WTC11 (cell line): ENCODE measurements at regions of chr6 and their contacts with region 1.

Region 1: DNA sequence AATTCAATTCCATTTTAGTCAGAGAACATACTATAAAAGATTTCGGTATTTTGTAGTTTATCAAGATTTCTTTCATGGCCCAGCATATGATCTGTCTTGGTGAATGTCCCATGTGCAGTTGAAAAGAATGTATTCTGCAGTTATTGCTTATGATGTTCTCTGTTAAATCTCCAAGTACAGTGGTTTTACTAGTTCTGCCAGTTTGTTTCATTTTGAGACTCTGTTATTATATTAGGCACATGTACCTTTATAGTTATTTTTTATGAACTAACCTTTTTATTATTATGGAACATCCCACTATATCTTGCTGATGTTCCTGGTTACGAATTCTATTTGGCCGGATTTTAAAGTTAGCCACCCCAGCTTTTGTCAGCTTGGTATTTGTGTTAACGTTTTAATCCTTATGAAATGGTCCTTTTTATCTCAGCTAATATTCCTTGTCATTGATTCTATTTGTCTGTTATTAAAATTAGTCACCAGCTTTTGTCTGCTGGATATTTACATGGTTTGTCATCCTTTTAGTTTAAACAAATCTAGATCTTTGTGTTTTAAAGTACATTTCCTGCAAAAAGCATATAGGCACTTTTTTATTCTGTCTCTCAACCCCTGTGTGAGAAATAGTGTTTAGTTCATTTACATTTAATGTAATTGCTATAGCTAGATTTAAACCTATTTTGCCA is 48.9 kb downstream of the VTA1 start:
- DNase-seq: no peak
- ATAC-seq: no peak
- H3K4me3 Mint-ChIP-seq: no peak overlapping the region
- H3K27ac Mint-ChIP-seq: no peak overlapping the region
- H3K4me1 Mint-ChIP-seq: no peaks in the 10 kb centered on the region
- H3K27me3 Mint-ChIP-seq: no peaks in the 10 kb centered on the region
- CTCF ChIP-seq: no peak

Region 2: GRCh38 chr6:142155895-142156757 is 39.9 kb before region 1 on chr6:
- CTCF ChIA-PET with region 1: interaction called, 11 read pairs
- POLR2A ChIA-PET with region 1: no interaction called
- DNase-seq: no peak
- ATAC-seq: peak; percentile 93
- H3K4me3 Mint-ChIP-seq: peak overlapping the region; percentile 52
- H3K27ac Mint-ChIP-seq: peak overlapping the region; percentile 97
- H3K4me1 Mint-ChIP-seq: peaks cover 44% of the 10 kb centered on the region
- H3K27me3 Mint-ChIP-seq: no peaks in the 10 kb centered on the region
- CTCF ChIP-seq: peak; percentile 41; the same call in 1 of the 2 replicates

Region 3: GRCh38 chr6:142207265-142207877 is 11.4 kb after region 1 on chr6:
- CTCF ChIA-PET with region 1: interaction called, 11 read pairs
- POLR2A ChIA-PET with region 1: no interaction called
- DNase-seq: peak; percentile 59
- ATAC-seq: peak; percentile 99
- H3K4me3 Mint-ChIP-seq: no peak overlapping the region
- H3K27ac Mint-ChIP-seq: 0 out of 2 replicates have a peak overlapping the region, but pooled peaks have one; percentile 64
- H3K4me1 Mint-ChIP-seq: no peaks in the 10 kb centered on the region
- H3K27me3 Mint-ChIP-seq: no peaks in the 10 kb centered on the region
- CTCF ChIP-seq: peak; percentile 85